Activated B cell treated with CpG ODN at 0.5 μM for 24 hours (primary cell): ENCODE measurements at regions of chr12 and their contacts with region 1.

Region 1: DNA sequence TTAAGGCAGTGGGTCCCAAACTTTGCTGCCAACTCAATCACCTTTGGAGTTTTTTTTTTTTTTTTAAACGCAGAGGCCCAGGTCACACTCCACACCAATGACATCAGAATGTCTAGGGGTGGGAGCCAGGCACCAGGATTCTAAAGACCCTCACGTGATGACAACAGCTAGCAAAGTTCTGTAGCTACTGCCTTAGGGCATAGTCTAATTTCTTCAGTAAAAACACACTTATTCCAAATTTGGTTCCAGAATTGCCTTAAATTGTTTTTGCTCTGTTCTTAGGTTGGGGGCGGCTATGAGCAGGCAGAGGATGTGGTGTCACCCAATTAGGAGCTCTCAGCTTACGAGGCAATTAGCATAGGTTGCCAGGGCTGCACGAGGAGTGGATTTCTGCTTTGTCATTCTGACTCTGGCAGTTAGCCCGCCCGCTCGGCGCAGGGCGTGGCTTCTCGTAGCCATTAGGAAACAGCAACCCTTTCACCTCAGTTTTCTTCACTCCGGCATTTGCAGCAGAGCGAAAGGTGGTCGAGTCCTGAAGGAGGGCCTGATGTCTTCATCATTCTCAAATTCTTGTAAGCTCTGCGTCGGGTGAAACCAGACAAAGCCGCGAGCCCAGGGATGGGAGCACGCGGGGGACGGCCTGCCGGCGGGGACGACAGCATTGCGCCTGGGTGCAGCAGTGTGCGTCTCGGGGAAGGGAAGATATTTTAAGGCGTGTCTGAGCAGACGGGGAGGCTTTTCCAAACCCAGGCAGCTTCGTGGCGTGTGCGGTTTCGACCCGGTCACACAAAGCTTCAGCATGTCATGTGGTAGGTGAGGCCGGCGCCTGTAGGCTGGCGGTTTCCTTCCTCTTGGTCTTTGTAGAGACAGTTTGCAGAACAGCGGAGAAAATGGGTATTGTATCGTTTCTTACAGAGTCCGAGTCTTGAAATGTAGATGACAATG is 16.7 kb upstream of the EID3 start:
- DNase-seq: peak; percentile 76
- ATAC-seq: peak; percentile 86
- H3K4me3 Mint-ChIP-seq: peak overlapping the region; percentile 100
- H3K27ac Mint-ChIP-seq: peak overlapping the region; percentile 99
- H3K4me1 Mint-ChIP-seq: peaks cover 40% of the 10 kb centered on the region
- H3K27me3 Mint-ChIP-seq: peaks cover 2% of the 10 kb centered on the region
- CTCF ChIP-seq: no peak

Region 2: DNA sequence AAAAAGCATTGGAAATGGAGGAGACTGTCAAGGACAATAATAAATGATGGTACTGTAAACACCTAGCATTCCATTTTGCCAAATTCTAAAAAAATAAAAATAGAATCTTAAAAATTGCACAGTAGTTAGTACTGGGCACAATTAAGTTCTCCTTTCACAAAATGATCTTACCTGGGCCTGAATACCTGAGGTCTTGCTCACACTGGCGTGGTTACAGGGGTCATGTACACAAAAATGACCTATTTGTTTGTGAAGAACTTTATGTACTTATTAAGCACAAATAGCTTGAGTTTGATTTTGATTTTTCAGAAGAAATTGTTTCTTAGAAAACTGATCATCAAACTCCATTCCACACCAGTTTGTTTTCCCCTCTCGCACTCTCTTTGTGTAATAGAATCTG is 1125.2 kb before region 1 on chr12:
- CTCF ChIA-PET with region 1: no interaction called
- POLR2A ChIA-PET with region 1: no interaction called
- intact Hi-C with region 1: no loop called
- DNase-seq: no peak
- ATAC-seq: no peak
- H3K4me3 Mint-ChIP-seq: no peak overlapping the region
- H3K27ac Mint-ChIP-seq: no peak overlapping the region
- H3K4me1 Mint-ChIP-seq: no peaks in the 10 kb centered on the region
- H3K27me3 Mint-ChIP-seq: peaks cover 3% of the 10 kb centered on the region
- CTCF ChIP-seq: no peak

Region 3: DNA sequence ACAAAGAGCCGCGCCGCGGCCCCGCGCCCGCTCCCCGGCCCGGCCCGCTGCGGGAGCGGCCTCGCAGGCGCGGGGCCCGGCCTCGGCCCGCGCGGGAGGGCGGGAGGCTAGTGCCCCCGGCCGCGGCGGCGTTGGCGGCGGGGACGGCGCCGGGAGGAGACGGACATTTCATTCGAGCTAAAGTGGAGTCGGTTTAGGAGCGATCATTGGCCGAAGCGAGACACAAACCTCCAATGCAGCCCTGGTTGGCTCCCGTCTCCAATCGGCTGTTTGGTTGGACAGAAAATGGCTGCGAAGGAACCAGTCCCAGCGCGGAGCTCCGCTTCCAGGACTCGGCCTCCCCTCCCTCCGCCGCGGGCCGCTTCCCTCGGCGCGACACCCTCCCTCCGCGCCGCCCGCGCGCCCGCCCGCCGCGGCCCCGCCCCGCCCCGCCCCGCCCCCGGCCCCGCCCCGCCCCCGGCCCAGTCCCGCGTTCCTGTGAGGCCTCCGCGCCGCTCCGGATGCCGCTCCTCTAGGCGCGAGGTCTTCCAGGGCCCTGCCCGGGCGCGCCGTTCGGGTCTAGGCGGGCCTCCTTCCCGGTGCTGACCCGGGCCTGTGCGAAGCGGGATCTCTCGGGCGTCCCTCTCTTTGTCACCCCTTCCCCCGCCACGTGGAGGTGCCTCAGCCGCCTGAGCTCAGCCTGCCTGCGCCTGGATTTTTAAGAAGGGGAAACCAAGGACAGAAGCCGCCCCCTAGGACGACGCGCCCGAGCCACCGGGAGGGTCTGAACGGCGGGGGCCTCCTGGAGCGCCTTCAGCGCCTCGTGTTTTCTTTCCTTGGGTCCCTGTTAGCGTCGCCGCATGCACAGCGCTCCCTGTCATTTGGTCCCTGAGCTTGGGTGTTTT is 148.7 kb before region 1 on chr12 and contains the start of gene NFYB:
- CTCF ChIA-PET with region 1: no interaction called
- POLR2A ChIA-PET with region 1: interaction called, 16 read pairs
- intact Hi-C with region 1: loop called (anchors 2 kb)
- DNase-seq: peak; percentile 90
- ATAC-seq: peak; percentile 94
- H3K4me3 Mint-ChIP-seq: peak within 1 kb of the TSS; percentile 89
- H3K27ac Mint-ChIP-seq: peak within 1 kb of the TSS; percentile 85
- H3K4me1 Mint-ChIP-seq: peaks cover 21% of the 10 kb centered on the region
- H3K27me3 Mint-ChIP-seq: no peaks in the 10 kb centered on the region
- CTCF ChIP-seq: no peak
- total RNA-seq, gene NFYB: 17.0 and 17.1 TPM in 2 replicates

Region 4: DNA sequence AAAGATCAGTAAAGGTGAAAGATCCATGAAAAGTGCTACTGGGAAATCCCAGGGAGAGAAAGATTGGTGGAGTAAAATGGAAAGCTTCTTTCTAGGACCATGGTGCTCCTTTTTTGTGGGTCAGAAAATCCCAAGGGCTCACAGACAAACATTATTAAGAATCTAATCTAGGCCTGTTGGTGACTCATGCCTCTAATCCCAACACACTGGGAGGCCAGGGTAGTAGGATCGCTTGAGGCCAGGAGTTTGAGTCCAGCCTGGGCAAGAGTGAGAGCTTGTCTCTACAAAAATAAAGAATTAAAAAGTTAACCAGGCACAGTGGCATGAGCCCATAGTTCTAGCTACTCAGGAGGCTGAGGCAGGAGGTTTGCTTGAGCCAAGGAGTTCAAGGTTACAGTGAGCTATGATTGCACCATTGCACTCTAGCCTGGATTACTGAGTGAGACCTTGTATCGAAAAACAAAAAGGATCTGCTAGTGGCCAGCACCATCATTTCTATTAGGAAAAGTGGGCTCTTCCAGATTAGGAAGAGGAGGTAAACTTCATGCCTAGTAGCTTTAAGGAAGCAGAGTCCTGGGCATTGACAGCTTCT is 28.2 kb before region 1 on chr12:
- CTCF ChIA-PET with region 1: interaction called, 3 read pairs
- POLR2A ChIA-PET with region 1: no interaction called
- intact Hi-C with region 1: loop called (anchors 2 kb)
- DNase-seq: no peak
- ATAC-seq: no peak
- H3K4me3 Mint-ChIP-seq: no peak overlapping the region
- H3K27ac Mint-ChIP-seq: no peak overlapping the region
- H3K4me1 Mint-ChIP-seq: no peaks in the 10 kb centered on the region
- H3K27me3 Mint-ChIP-seq: peaks cover 3% of the 10 kb centered on the region
- CTCF ChIP-seq: no peak

Region 5: DNA sequence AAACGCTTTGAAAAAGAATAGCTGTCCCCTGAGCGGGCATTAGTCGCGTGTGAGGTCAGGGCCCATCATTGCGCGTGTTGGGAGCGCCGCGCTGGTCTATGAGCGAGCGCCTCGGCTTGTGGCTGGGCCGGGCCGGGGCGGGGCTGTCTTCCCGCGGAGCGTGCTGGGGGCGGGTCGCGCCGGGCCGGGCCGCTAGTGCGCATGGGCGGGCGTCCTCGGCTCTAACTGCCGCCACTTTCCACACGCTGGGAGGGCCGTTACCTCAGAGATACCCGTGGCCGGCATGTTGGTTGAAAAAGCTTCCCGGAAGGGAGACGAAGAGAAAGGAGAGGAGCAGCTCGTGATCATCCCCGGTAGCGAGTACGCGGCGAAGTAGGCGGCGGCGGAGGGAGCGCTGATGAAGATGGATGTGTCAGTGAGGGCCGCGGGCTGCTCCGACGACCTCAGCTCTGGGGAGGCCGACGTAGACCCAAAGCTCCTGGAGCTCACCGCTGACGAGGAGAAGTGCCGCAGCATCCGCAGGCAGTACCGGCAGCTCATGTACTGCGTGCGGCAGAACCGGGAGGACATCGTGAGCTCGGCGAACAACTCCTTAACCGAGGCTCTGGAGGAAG is 16.8 kb after region 1 on chr12 and contains the start of gene EID3:
- CTCF ChIA-PET with region 1: interaction called, 3 read pairs
- POLR2A ChIA-PET with region 1: interaction called, 42 read pairs
- intact Hi-C with region 1: loop called (anchors 1 kb)
- DNase-seq: peak; percentile 88
- ATAC-seq: peak; percentile 99
- H3K4me3 Mint-ChIP-seq: peak within 1 kb of the TSS; percentile 94
- H3K27ac Mint-ChIP-seq: peak within 1 kb of the TSS; percentile 93
- H3K4me1 Mint-ChIP-seq: peaks cover 37% of the 10 kb centered on the region
- H3K27me3 Mint-ChIP-seq: no peaks in the 10 kb centered on the region
- CTCF ChIP-seq: no peak
- total RNA-seq, gene EID3: 6.2 TPM in 2 replicates

Region 6: DNA sequence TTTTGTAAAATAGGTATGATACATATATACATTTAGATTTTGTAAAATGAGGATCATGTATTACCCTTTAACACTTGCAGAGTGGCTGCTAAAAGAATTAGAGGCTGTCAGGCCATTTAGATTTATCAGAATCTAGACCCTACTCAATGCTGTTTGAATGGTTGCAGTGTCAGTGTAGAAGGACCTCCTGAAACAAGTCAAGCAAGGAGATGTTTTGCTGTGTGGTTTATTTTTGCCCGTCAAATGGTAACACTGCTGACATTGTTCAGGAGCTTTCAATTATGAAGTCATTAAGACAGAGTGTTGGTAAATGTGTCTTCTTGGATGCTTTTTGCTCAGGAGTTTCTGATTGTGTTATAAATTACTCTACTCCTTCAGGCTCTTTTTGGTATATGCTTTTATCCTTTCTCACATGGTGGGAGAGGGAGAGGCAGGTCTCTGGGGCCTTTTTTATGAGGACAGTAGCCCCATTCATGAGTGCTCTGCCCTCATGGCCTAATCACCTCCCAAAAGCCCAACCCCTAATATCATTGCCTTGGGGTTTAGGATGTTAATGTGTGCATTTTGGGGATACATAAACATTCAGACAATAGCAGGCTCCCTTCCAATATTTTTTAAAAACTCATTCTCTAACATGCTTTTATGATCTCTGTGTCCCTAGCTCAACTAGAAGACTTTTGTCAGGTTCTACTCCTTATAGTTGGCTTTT is 33.3 kb after region 1 on chr12:
- CTCF ChIA-PET with region 1: no interaction called
- POLR2A ChIA-PET with region 1: no interaction called
- intact Hi-C with region 1: no loop called
- DNase-seq: no peak
- ATAC-seq: no peak
- H3K4me3 Mint-ChIP-seq: no peak overlapping the region
- H3K27ac Mint-ChIP-seq: no peak overlapping the region
- H3K4me1 Mint-ChIP-seq: no peaks in the 10 kb centered on the region
- H3K27me3 Mint-ChIP-seq: no peaks in the 10 kb centered on the region
- CTCF ChIP-seq: no peak

Region 7: GRCh38 chr12:104958009-104958945 is 671.5 kb after region 1 on chr12 and contains the start of gene SLC41A2:
- CTCF ChIA-PET with region 1: no interaction called
- POLR2A ChIA-PET with region 1: interaction called, 4 read pairs
- intact Hi-C with region 1: loop called (anchors 5 kb)
- DNase-seq: peak; percentile 90
- ATAC-seq: peak; percentile 86
- H3K4me3 Mint-ChIP-seq: peak within 1 kb of the TSS; percentile 93
- H3K27ac Mint-ChIP-seq: peak within 1 kb of the TSS; percentile 92
- H3K4me1 Mint-ChIP-seq: peaks cover 26% of the 10 kb centered on the region
- H3K27me3 Mint-ChIP-seq: peaks cover 2% of the 10 kb centered on the region
- CTCF ChIP-seq: no peak
- total RNA-seq, gene SLC41A2: 11.1 and 12.6 TPM in 2 replicates

Region 8: DNA sequence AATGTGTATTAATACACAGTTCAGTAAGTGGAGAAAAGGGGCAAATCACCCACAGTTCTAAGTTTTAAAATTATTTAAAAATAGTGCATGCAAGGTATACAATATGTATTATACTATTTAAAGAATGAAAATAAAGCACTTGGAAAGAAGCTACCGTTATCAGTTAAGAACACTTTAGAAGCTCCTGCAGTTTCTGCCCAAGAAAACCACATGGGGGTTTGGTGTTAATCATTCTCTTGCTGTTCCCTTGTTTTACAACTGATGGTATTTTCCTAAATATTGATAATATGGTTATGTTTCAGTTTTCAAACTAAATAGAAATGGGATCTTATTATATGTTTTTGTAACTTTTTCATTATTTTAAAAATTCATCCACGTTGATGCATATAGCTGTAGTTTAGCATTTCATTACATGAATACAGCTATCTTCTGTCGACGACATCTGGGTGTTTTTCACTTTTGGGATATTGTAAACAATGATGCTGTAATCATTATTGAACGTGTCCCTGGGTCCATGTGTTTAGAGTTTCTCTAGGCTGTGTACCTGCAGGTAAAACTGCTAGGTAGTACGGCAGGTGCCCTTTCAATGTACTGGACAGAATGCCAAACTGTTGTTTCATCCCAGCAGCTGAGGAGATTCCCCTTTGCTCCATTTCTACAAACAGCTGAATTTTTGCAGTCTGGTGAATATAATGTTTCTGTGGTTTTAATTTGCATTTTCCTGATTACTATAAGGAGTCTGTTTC is 885.1 kb after region 1 on chr12:
- CTCF ChIA-PET with region 1: no interaction called
- POLR2A ChIA-PET with region 1: no interaction called
- intact Hi-C with region 1: no loop called
- DNase-seq: no peak
- ATAC-seq: no peak
- H3K4me3 Mint-ChIP-seq: no peak overlapping the region
- H3K27ac Mint-ChIP-seq: peak overlapping the region; percentile 4
- H3K4me1 Mint-ChIP-seq: no peaks in the 10 kb centered on the region
- H3K27me3 Mint-ChIP-seq: no peaks in the 10 kb centered on the region
- CTCF ChIP-seq: no peak

Region 9: GRCh38 chr12:105330283-105330930 is 1043.6 kb after region 1 on chr12 and contains the start of gene C12orf75:
- CTCF ChIA-PET with region 1: no interaction called
- POLR2A ChIA-PET with region 1: no interaction called
- intact Hi-C with region 1: loop called (anchors 10 kb)
- DNase-seq: peak; percentile 82
- ATAC-seq: peak; percentile 94
- H3K4me3 Mint-ChIP-seq: peak within 1 kb of the TSS; percentile 86
- H3K27ac Mint-ChIP-seq: peak within 1 kb of the TSS; percentile 76
- H3K4me1 Mint-ChIP-seq: peaks cover 47% of the 10 kb centered on the region
- H3K27me3 Mint-ChIP-seq: no peaks in the 10 kb centered on the region
- CTCF ChIP-seq: no peak
- total RNA-seq, gene C12orf75: 37.1 and 40.8 TPM in 2 replicates